ENCODE measurements at regions of chr11 and their contacts with region 1.

Region 1: DNA sequence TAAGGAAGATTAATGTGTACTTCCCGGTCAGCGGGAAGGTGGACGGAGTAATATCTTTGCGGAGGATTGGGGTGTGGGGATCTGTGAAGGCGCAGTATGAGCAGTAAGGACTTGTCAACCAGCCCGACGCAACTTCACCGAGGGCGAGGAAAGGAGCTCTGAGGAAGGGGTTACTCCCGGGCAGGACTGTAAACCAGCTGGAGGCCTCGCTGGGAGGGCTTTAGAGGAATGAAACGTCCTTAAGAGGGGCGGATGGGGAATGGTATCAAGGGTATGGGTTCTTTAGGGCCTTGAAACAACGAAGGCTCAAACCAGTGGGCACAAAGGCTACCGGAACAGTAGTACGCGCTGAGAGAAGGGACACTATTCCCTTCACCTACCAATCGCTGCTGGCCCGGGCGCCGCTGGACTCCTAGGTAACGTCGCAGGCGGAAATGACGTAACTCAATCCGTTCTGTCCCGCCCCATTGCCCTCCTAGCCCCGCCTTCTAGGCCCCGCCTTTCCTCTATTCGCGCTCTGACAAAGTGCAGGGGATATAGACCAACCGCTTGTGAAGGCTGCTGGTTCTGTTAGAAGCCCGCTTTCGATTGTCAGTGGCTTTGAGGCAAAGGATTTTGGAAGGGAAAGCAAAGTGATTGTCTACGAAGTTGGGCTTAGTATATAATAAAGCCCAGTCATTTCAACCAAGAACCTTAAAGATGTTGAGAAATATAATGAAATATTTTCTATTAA is at the start of gene C11orf65:
- DNase-seq: peak; percentile 94 to 97
- ATAC-seq: peak; percentile 100
- H3K4me3 ChIP-seq: peak within 1 kb of the TSS; percentile 77
- H3K27ac ChIP-seq: peak within 1 kb of the TSS; percentile 96
- H3K4me1 ChIP-seq: peaks cover 4% of the 10 kb centered on the region
- H3K27me3 ChIP-seq: no peaks in the 10 kb centered on the region
- CTCF ChIP-seq: no peak
- total RNA-seq, gene C11orf65: 0.16 to 0.64 (median 0.40) TPM

Region 2: GRCh38 chr11:108483163-108483562 is 15.9 kb after region 1 on chr11:
- intact Hi-C with region 1: loop called in 1 of 2 experiments (anchors 1 kb)
- DNase-seq: no peak
- ATAC-seq: no peak
- H3K4me3 ChIP-seq: no peak overlapping the region
- H3K27ac ChIP-seq: no peak overlapping the region
- H3K4me1 ChIP-seq: no peaks in the 10 kb centered on the region
- H3K27me3 ChIP-seq: no peaks in the 10 kb centered on the region
- CTCF ChIP-seq: no peak

Region 3: DNA sequence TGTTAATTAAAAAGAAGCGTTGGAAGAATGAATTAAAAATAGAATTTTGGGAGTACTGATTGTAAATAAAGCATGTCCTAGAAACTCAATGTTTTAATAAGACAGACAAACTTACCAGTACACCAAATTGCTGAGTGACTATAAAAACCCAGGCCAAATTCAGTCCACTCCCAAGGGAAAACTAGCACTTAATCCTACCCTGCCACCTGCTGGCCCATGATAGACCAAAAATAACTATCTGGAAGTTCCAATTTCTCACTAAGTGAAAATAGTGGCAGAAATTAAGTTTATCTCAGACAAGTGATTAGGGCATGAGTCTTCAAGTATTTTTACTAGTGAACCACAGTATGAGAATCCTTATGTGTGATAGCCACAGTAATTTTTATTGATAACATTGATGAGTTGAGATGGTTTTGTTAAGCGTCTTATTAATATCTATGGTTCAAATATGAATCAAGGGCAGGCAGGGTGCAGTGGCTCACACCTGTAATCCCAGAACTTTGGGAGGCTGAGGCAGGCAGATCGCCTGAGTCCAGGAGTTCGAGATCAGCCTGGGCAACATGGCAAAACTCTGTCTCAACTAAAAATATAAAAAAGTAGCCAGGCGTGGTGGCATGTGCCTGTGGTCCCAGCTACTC is 187.9 kb after region 1 on chr11:
- intact Hi-C with region 1: loop called in 1 of 2 experiments (anchors 10 kb)
- DNase-seq: no peak
- ATAC-seq: peak; percentile 47 to 77 (median 54)
- H3K4me3 ChIP-seq: no peak overlapping the region
- H3K27ac ChIP-seq: no peak overlapping the region
- H3K4me1 ChIP-seq: no peaks in the 10 kb centered on the region
- H3K27me3 ChIP-seq: no peaks in the 10 kb centered on the region
- CTCF ChIP-seq: peak; percentile 55

Region 4: GRCh38 chr11:108685419-108686130 is 218.3 kb after region 1 on chr11:
- intact Hi-C with region 1: no loop called
- DNase-seq: no peak
- ATAC-seq: no peak
- H3K4me3 ChIP-seq: no peak overlapping the region
- H3K27ac ChIP-seq: no peak overlapping the region
- H3K4me1 ChIP-seq: no peaks in the 10 kb centered on the region
- H3K27me3 ChIP-seq: no peaks in the 10 kb centered on the region
- CTCF ChIP-seq: no peak

Measured in psoas muscle (tissue), 8 donors.